ENCODE measurements at regions of chr1 and their contacts with region 1.

Region 1: GRCh38 chr1:205255941-205256780 is 28.4 kb downstream of the TMCC2 start:
- DNase-seq: peak; percentile 87
- H3K4me3 Mint-ChIP-seq: no peak overlapping the region
- H3K27ac Mint-ChIP-seq: no peak overlapping the region
- H3K4me1 Mint-ChIP-seq: no peaks in the 10 kb centered on the region
- H3K27me3 Mint-ChIP-seq: peaks cover 2% of the 10 kb centered on the region

Region 2: DNA sequence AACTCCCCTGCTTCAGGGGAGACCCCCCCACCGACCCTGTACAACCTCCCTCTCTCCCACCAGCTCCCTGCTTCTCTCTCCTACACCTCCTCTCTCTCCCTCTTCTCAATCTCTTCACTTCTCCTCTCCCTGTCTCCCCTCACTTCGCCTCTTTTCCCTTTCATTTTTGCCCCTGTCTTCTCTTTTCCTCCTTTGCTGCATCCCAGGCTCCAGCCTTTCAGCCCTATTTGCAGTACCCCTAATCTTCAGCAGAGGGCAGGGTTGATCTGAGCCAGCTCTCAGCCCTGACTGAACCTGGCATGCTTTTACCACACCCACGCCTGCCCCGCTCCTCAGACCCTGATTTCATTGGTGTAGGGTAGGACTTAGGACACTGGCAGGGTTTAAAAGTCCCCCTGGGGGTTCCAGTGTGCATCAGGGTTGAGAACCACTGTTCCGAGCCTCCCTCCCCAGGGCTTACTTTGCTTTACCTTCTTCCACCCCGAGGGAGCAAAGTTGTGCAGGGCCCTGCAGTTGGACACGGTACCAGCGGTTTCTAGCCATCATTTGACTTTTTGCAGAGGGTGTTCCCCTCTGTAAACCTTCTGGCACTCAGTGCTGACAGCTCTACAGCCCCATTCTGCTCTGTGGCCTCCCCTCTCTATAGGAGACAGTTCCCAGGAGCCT is 280.5 kb before region 1 on chr1:
- CTCF ChIA-PET with region 1: interaction called, 18 read pairs
- POLR2A ChIA-PET with region 1: no interaction called
- DNase-seq: peak; percentile 47
- H3K4me3 Mint-ChIP-seq: no peak overlapping the region
- H3K27ac Mint-ChIP-seq: no peak overlapping the region
- H3K4me1 Mint-ChIP-seq: no peaks in the 10 kb centered on the region
- H3K27me3 Mint-ChIP-seq: peaks cover 23% of the 10 kb centered on the region

Region 3: DNA sequence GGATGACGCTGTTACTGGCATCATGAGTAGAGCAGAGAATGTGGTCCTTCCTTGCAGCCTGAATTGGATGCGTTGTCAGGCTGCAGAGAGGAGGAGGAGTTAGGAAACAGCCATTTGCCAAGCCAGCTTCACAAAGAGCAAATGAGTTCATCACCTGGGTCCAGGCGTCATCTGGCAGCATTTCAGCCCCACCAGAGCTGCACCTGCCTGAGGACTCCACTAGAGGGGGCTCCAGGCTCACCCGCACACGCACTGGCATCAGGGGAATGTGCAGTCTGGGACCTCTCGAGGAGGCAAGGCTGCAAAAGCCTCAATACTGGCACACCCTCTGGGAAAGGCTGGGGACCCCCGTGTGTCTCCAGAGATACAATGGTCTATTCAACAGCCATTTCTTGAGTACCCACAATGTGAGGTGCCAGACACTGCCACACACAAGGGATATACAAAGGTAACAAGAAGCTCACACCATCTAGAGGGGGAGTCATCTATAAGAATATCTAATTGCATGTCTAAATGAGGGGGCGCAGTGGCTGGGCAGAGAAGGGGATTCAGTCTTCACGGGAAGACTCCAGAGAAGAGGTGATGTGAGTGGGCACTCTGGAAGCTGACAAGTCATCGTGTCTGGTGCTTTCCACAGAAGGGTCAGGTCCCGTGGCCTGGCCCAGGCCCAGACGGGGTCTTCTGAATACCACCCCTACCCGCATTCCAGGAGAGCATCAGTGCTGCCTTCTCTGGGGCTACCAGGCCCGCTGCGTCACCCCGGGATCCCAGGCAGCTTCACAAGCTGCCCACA is 266.7 kb before region 1 on chr1:
- CTCF ChIA-PET with region 1: interaction called, 31 read pairs
- POLR2A ChIA-PET with region 1: no interaction called
- DNase-seq: peak; percentile 63
- H3K4me3 Mint-ChIP-seq: no peak overlapping the region
- H3K27ac Mint-ChIP-seq: no peak overlapping the region
- H3K4me1 Mint-ChIP-seq: peaks cover 16% of the 10 kb centered on the region
- H3K27me3 Mint-ChIP-seq: peaks cover 7% of the 10 kb centered on the region

Region 4: GRCh38 chr1:205141236-205142101 is 114.7 kb before region 1 on chr1:
- CTCF ChIA-PET with region 1: interaction called, 31 read pairs
- POLR2A ChIA-PET with region 1: no interaction called
- DNase-seq: peak; percentile 80
- H3K4me3 Mint-ChIP-seq: no peak overlapping the region
- H3K27ac Mint-ChIP-seq: no peak overlapping the region
- H3K4me1 Mint-ChIP-seq: peaks cover 4% of the 10 kb centered on the region
- H3K27me3 Mint-ChIP-seq: no peaks in the 10 kb centered on the region

Region 5: DNA sequence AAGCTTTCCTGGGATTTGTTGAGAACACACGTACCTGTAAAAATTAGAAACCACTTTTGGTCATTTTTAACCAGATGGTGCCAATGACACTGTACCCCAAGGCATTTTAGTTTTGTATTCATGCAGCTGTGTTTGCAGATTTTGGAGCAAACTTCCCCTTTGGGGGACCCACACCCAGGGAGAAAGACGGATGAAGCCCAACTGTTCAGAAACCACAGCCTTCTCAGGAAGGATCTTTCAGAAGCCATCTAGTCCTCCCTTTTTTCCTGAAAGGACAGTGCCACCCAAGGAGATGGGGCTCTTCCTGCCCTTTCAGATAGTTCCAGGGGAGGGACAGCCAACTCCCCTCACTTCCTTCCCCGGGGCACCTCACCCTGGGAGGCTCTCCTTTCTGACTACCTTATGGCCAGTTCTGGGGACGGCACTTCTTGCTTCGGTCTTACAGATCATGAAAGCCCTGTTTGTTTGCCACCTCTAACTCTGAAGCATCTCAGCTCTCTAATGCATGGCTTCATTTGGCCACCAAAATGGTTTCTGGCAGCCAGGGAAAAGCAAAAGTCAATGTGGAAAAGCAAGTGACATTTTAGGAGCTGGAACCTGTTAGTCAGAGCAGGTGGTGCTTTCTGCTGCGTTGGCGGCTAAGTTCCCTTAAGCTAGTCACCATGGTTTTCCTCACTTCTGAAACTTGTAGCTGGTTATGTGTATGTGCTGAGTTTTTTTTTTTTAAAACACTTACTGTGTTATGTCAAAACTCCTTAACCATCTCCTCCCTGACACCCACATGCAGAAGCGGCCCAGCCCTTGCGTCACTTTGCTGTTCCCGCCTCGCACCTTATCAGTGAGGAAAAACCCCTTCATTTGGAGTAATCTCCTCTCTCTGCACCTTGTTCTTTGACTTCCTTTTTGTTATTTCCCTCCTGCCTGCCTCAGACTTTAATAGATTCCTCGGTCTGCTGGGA is 18.4 kb before region 1 on chr1:
- CTCF ChIA-PET with region 1: interaction called, 14 read pairs
- POLR2A ChIA-PET with region 1: no interaction called
- DNase-seq: no peak
- H3K4me3 Mint-ChIP-seq: no peak overlapping the region
- H3K27ac Mint-ChIP-seq: no peak overlapping the region
- H3K4me1 Mint-ChIP-seq: peaks cover 20% of the 10 kb centered on the region
- H3K27me3 Mint-ChIP-seq: peaks cover 13% of the 10 kb centered on the region

Region 6: DNA sequence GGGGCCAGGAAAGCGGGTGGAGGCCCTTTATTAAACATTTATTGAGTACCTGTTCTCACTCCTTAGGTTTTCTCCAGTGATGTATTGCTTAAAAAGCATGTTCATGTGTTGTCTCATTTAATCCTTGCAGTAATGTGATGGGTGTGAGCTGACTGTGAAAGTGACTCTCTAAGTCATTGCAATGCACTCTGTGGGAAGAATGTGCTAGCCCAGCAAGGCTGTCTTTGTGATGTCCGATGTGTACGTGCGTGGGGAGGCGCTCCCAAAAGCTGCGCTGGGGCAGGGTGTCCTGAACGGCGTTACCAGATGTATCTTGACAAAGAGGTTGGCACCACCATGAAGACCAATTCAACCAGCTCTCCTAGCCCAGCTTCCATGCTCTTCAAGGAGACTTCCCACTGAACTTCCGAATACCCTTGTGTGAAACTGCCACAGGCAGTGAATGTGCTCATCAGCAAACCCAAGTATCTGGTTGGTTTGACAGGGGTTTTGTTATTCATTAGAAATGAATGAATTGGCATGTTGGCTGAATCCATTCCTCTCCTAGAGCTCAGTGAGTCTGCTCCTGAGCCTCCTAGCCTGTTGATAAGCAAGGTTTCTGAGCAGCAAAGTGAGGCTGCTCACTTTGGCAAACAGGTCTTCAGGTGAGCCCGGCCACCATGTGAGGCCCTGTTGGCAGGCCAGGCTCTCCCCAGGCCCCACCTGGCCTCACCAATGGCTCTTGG is 37.4 kb after region 1 on chr1:
- CTCF ChIA-PET with region 1: no interaction called
- POLR2A ChIA-PET with region 1: no interaction called
- DNase-seq: no peak
- H3K4me3 Mint-ChIP-seq: no peak overlapping the region
- H3K27ac Mint-ChIP-seq: no peak overlapping the region
- H3K4me1 Mint-ChIP-seq: peaks cover 24% of the 10 kb centered on the region
- H3K27me3 Mint-ChIP-seq: peaks cover 9% of the 10 kb centered on the region

Region 7: DNA sequence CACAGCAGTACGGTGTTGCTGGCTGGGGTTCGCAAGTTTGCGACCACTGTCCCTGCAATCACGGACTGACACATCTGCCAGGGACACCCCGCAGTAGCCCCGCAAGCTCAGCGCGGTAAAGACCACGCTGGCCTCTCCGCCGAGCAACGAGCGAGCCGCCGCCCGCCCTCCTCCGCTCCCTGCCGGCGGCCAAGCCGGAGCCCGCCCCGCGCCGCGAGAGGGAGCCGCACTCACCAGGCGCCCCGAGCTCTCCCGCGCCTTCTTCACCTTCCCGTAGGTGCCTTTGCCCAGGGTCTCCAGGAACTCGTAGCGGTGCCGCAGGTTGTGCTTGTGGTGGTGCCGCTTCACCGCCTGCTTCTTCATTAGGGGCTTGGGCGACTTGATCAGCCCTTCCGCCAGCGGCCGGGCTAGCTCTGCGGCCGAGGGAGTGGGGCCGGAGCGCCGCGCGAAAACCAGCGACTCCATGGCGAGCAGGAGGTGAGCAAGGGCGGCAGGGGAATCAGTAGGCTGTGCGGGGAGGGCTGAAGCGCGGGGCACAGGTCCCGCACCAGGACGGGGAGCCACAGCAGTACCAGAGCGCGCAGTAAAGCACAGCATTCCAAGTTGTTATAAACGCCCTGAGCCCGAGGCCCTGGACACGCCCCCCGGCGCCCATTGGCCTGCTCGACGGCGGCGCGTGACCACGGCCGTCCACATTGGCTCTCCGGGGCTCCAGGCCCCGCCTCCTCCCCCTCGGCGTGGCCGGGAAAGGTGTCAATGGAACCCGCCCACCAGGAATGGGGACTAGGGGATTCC is 65.2 kb after region 1 on chr1 and contains the start of gene NUAK2:
- CTCF ChIA-PET with region 1: interaction called, 17 read pairs
- POLR2A ChIA-PET with region 1: no interaction called
- DNase-seq: peak; percentile 80
- H3K4me3 Mint-ChIP-seq: peak within 1 kb of the TSS; percentile 86
- H3K27ac Mint-ChIP-seq: peak within 1 kb of the TSS; percentile 71
- H3K4me1 Mint-ChIP-seq: peaks cover 54% of the 10 kb centered on the region
- H3K27me3 Mint-ChIP-seq: peaks cover 22% of the 10 kb centered on the region
- total RNA-seq, gene NUAK2: 12.4 to 13.0 TPM

Region 8: GRCh38 chr1:205359771-205360565 is 103.8 kb after region 1 on chr1:
- CTCF ChIA-PET with region 1: no interaction called
- POLR2A ChIA-PET with region 1: no interaction called
- DNase-seq: no peak
- H3K4me3 Mint-ChIP-seq: no peak overlapping the region
- H3K27ac Mint-ChIP-seq: no peak overlapping the region
- H3K4me1 Mint-ChIP-seq: no peaks in the 10 kb centered on the region
- H3K27me3 Mint-ChIP-seq: peaks cover 47% of the 10 kb centered on the region

Measured in activated CD4-positive, alpha-beta memory T cell treated with anti-CD3 and anti-CD28 coated beads, Interleukin-2, amount 10 ng/mL, durations not matched to agents 7 days and 5 days (primary cell).